A673 (cell line): ENCODE measurements at regions of chr12 and their contacts with region 1.

Region 1: GRCh38 chr12:98868076-98868475 is 223.0 kb downstream of the APAF1 start:
- DNase-seq: no peak
- H3K4me3 ChIP-seq: no peak overlapping the region
- H3K27ac ChIP-seq: no peak overlapping the region
- H3K4me1 ChIP-seq: no peaks in the 10 kb centered on the region
- H3K27me3 ChIP-seq: no peaks in the 10 kb centered on the region
- CTCF ChIP-seq: no peak

Region 2: DNA sequence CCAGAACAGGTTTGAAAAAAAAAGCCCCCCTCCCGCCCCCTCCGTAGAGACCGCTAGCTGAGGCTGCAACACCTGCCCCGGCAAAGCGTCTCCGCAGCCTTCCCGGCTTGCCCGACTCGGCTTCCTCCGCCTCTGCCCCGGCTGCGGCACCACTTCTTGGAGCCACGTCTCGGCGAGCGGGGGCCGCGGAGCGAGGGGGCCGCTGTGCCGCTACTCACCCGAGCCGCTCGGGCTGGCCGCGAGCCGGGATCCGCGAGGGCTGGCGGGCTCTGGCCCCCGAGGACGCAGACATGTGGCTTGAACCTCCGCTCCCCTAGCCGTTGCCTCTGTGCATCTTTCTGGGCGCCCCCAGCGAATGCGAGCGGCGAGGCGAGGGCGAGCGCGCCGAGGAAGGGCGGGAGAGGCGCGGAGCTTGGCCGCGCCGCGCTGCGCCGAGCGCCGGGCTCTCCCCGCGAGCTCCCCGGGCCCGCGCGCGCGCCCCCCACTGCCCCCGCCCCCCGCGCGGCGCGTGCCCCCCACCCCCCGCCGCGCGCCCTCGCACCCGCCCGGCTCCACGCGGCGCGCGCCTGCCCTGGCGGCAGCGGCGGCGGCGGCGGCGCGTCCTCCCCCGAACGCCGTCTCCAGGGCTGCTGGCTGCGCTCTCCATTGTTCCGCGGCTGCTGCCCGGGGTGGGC is 26.5 kb after region 1 on chr12:
- CTCF ChIA-PET with region 1: no interaction called
- POLR2A ChIA-PET with region 1: interaction called, 11 read pairs
- intact Hi-C with region 1: no loop called
- DNase-seq: peak; percentile 58
- H3K4me3 ChIP-seq: peak overlapping the region; percentile 38
- H3K27ac ChIP-seq: no peak overlapping the region
- H3K4me1 ChIP-seq: peaks cover 6% of the 10 kb centered on the region
- H3K27me3 ChIP-seq: peaks cover 97% of the 10 kb centered on the region
- CTCF ChIP-seq: no peak